Head of caudate nucleus (tissue), 42 donors: ENCODE measurements at regions of chr11 and their contacts with region 1.

Region 1: GRCh38 chr11:119615003-119615881 is 113.8 kb downstream of the NECTIN1 start:
- DNase-seq: peak; percentile 59 to 92 (median 82)

Region 2: GRCh38 chr11:119493712-119494111 is 121.5 kb before region 1 on chr11:
- intact Hi-C with region 1: no loop called
- DNase-seq: no peak

Region 3: GRCh38 chr11:119533921-119534736 is 81.1 kb before region 1 on chr11:
- intact Hi-C with region 1: loop called (anchors 10 kb)
- DNase-seq: peak; percentile 50 to 95 (median 87)